SK-N-SH (cell line): ENCODE measurements at regions of chr15 and their contacts with region 1.

Region 1: DNA sequence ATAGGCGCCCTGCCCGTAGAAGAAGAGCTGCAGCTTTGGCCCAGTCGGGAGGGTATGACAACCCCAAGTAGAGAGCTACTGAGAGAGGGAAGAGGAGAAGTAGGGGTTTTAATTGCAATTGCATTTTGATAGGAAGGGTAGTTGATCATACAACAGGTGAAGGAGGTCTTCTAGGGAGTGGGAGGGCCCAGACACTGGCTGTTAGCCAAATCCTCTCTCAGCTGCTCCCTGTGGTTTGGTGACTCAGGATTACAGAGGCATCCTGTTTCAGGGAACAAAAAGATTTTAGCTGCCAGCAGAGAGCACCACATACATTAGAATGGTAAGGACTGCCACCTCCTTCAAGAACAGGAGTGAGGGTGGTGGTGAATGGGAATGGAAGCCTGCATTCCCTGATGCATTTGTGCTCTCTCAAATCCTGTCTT is 408.9 kb upstream of the THBS1 start:
- DNase-seq: peak; percentile 31
- H3K4me3 ChIP-seq: no peak overlapping the region
- H3K27ac ChIP-seq: peak overlapping the region; percentile 58 to 78; a peak in 3 of 4 replicates
- H3K4me1 ChIP-seq: peaks cover 7 to 8% of the 10 kb centered on the region in 2 experiments
- H3K27me3 ChIP-seq: no peaks in the 10 kb centered on the region
- CTCF ChIP-seq: peak; percentile 73
- EP300 ChIP-seq: peak in 1 of 2 experiments; percentile 77; a peak in 1 of 4 replicates
- RAD21 ChIP-seq: peak; percentile 87

Region 2: GRCh38 chr15:38895326-38896255 is 276.4 kb before region 1 on chr15:
- CTCF ChIA-PET with region 1: no interaction called
- POLR2A ChIA-PET with region 1: no interaction called
- DNase-seq: no peak
- H3K4me3 ChIP-seq: no peak overlapping the region; a peak in 1 of 4 replicates
- H3K27ac ChIP-seq: peak overlapping the region; percentile 89 to 99
- H3K4me1 ChIP-seq: peaks cover 14 to 28% of the 10 kb centered on the region in 2 experiments
- H3K27me3 ChIP-seq: no peaks in the 10 kb centered on the region
- CTCF ChIP-seq: no peak
- EP300 ChIP-seq: peak; percentile 81 to 84
- RAD21 ChIP-seq: no peak

Region 3: DNA sequence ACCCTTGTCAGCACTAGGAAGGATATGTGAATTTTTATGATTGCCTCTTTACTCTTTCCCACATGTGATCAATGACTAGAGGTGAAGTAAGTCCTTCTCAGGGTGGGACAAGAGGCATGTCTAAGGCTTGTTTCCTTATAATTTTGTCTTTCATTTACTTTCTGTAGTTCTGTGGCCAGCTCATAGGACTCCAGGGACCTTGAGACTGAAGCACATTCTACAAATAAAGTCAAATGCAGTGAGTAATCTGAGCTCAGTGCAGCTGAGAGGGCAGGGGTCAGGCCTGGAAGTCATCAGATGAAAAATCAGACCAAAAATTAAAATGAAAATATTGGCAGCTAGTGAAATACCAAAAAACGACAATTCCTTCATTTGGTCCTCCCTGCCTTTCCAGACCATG is 15.8 kb before region 1 on chr15:
- CTCF ChIA-PET with region 1: interaction called, 10 read pairs
- POLR2A ChIA-PET with region 1: no interaction called
- DNase-seq: no peak
- H3K4me3 ChIP-seq: no peak overlapping the region
- H3K27ac ChIP-seq: no peak overlapping the region
- H3K4me1 ChIP-seq: no peaks in the 10 kb centered on the region; a peak in 1 of 4 replicates
- H3K27me3 ChIP-seq: no peaks in the 10 kb centered on the region
- CTCF ChIP-seq: no peak
- EP300 ChIP-seq: no peak
- RAD21 ChIP-seq: no peak